CD14-positive monocyte (primary cell): ENCODE measurements at regions of chr19 and their contacts with region 1.

Region 1: GRCh38 chr19:57389730-57390598 is at the start of gene ZNF548:
- DNase-seq: peak; percentile 98 to 99 (median 98)
- H3K4me3 ChIP-seq: peak within 1 kb of the TSS; percentile 68 to 92 (median 82)
- H3K4me3 Mint-ChIP-seq: peak within 1 kb of the TSS; percentile 91 to 98
- H3K27ac ChIP-seq: peak within 1 kb of the TSS; percentile 82 to 90
- H3K27ac Mint-ChIP-seq: peak within 1 kb of the TSS; percentile 87 to 95 (median 91)
- H3K4me1 ChIP-seq: peaks cover 13 to 18% of the 10 kb centered on the region in 2 donors
- H3K4me1 Mint-ChIP-seq: peaks cover 13% of the 10 kb centered on the region
- H3K27me3 ChIP-seq: no peaks in the 10 kb centered on the region
- H3K27me3 Mint-ChIP-seq: peaks cover 0 to 6% (median 2%) of the 10 kb centered on the region in 3 donors
- CTCF ChIP-seq: no peak
- polyA plus RNA-seq, gene ZNF548: 4.6 to 20.7 (median 6.0) TPM

Region 2: GRCh38 chr19:57362997-57363705 is 26.8 kb before region 1 on chr19 and contains the starts of genes TRAPPC2B and ZNF547:
- intact Hi-C with region 1: loop called (anchors 2 kb)
- DNase-seq: peak; percentile 97 to 100 (median 100)
- H3K4me3 ChIP-seq: peak within 1 kb of the TSS; percentile 40 to 76 (median 54)
- H3K4me3 Mint-ChIP-seq: peak within 1 kb of the TSS; percentile 81 to 86
- H3K27ac ChIP-seq: peak within 1 kb of the TSS; percentile 83 to 89
- H3K27ac Mint-ChIP-seq: peak within 1 kb of the TSS; percentile 85 to 97 (median 93)
- H3K4me1 ChIP-seq: peaks cover 12 to 14% of the 10 kb centered on the region in 2 donors
- H3K4me1 Mint-ChIP-seq: peaks cover 10% of the 10 kb centered on the region
- H3K27me3 ChIP-seq: no peaks in the 10 kb centered on the region
- H3K27me3 Mint-ChIP-seq: peaks cover 1 to 6% (median 4%) of the 10 kb centered on the region in 3 donors
- CTCF ChIP-seq: no peak
- polyA plus RNA-seq, gene TRAPPC2B: 7.4 to 13.9 (median 11.5) TPM
- polyA plus RNA-seq, gene ZNF547: 0.30 to 0.32 TPM in 2 of 3 donors, not detected in the other

Region 3: DNA sequence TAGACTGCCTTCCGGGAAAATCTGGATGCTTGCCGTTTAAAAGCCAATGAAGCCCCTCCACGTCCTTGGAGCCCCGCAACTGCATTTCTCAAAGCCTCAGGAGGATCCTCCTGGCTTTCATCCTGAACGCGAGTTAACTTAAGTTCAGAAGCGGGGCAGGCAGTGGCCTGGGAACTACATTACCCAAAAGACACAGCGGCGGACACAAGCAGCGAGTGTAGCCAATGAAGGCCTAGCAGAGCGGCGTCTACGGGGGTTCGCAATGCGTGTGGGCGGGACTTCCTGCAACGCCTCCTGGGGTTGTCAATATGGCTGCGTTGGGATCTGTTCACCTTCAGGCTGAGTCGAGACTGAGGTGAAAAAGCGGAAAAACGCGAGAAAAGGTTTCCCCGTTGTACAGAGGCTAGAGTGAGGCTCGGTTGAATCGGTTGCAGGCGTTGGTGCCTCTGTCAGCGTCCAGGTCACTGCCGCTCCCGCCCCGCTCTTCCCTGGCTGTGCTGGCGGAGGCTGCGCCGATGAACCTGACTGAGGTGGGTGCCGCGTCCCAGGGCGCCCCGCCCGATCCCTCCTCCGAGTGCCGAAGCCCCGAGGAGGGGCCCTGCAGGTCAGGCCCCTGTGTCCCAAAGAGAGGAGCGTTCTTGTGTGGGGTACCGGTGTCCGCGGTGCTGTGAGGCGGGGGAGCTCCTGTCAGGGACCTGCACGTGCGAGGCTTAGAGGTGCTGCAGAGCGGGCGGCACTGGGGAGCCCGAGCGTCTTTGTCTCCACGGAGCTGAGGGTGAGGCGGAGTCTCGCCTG is 21.1 kb after region 1 on chr19 and contains the start of gene ZNF17:
- intact Hi-C with region 1: loop called (anchors 2 kb)
- DNase-seq: peak; percentile 87 to 94 (median 90)
- H3K4me3 ChIP-seq: peak within 1 kb of the TSS; percentile 77 to 95 (median 91)
- H3K4me3 Mint-ChIP-seq: peak within 1 kb of the TSS; percentile 94 to 96
- H3K27ac ChIP-seq: peak within 1 kb of the TSS; percentile 10 to 81
- H3K27ac Mint-ChIP-seq: peak within 1 kb of the TSS; percentile 23 to 95 (median 78)
- H3K4me1 ChIP-seq: peaks cover 14 to 17% of the 10 kb centered on the region in 2 donors
- H3K4me1 Mint-ChIP-seq: peaks cover 14% of the 10 kb centered on the region
- H3K27me3 ChIP-seq: no peaks in the 10 kb centered on the region
- H3K27me3 Mint-ChIP-seq: peaks cover 0 to 3% (median 0%) of the 10 kb centered on the region in 3 donors
- CTCF ChIP-seq: no peak
- polyA plus RNA-seq, gene ZNF17: 1.4 to 3.3 (median 2.3) TPM